ENCODE measurements at regions of chr19 and their contacts with region 1.

Region 1: GRCh38 chr19:55418185-55418584 is 10.6 kb upstream of the UBE2S start:
- DNase-seq: peak; percentile 87
- H3K4me3 ChIP-seq: no peak overlapping the region
- H3K27ac ChIP-seq: no peak overlapping the region
- H3K4me1 ChIP-seq: no peaks in the 10 kb centered on the region
- H3K27me3 ChIP-seq: no peaks in the 10 kb centered on the region
- CTCF ChIP-seq: peak; percentile 85

Region 2: DNA sequence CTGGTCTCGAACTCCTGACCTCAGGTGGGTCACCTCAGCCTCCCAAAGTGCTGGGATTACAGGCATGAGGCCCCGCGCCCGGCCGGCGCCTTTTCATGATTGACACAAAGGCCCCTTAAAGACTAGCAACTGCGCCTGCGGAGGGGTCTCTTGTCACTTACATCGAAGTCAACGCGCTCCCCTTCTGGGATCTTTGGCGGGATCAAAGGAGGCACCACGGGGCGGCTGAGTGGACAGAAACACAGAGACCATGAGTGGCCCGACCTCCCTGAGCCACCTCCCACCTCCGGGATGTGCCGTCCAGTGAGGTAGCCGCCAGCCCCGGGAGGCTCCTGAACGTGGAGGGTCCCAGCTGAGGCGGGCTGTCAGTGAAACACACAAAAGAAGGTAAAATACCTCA is 276.5 kb before region 1 on chr19:
- CTCF ChIA-PET with region 1: interaction called, 7 read pairs
- POLR2A ChIA-PET with region 1: no interaction called
- intact Hi-C with region 1: loop called (anchors 1 kb)
- DNase-seq: no peak
- H3K4me3 ChIP-seq: peak overlapping the region; percentile 10
- H3K27ac ChIP-seq: no peak overlapping the region
- H3K4me1 ChIP-seq: peaks cover 7% of the 10 kb centered on the region
- H3K27me3 ChIP-seq: no peaks in the 10 kb centered on the region
- CTCF ChIP-seq: no peak

Region 3: GRCh38 chr19:55289117-55289796 is 128.9 kb before region 1 on chr19:
- CTCF ChIA-PET with region 1: no interaction called
- POLR2A ChIA-PET with region 1: no interaction called
- intact Hi-C with region 1: loop called (anchors 5 kb)
- DNase-seq: peak; percentile 48
- H3K4me3 ChIP-seq: no peak overlapping the region
- H3K27ac ChIP-seq: no peak overlapping the region
- H3K4me1 ChIP-seq: no peaks in the 10 kb centered on the region
- H3K27me3 ChIP-seq: no peaks in the 10 kb centered on the region
- CTCF ChIP-seq: no peak

Region 4: DNA sequence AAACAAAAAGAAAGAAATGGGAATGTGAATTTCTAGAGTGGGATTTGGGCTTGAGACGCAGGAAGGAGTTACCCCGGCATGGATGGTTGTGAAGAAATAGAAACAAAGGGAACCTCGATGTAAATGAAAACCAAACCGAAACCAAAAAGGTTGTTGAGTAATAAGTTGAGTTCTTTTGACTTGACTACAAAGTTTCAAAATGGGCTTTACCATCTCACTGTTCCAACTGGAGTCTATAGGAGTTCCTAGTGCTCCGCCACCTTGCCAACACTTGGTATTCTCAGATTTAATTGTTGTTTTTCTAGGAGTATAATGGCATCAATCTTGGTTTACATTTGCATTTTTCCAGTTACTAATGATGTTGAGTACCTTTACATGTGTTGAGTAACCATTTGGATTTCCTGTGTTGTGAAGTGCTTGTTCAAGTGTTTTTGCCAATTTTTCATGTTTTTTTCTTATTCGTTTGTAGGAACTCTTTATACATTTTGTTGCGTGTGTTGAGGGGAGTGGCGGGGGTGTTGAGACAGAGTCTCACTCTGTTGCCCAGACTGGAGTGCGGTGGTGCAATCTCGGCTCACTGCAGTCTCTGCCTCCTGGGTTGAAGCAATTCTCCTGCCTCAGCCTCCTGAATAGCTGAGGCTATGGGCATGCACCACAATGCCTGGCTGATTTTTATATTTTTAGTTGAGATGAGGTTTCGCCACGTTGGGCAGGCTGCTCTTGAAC is 19.8 kb before region 1 on chr19:
- CTCF ChIA-PET with region 1: no interaction called
- POLR2A ChIA-PET with region 1: no interaction called
- intact Hi-C with region 1: no loop called
- DNase-seq: no peak
- H3K4me3 ChIP-seq: no peak overlapping the region
- H3K27ac ChIP-seq: no peak overlapping the region
- H3K4me1 ChIP-seq: peaks cover 5% of the 10 kb centered on the region
- H3K27me3 ChIP-seq: no peaks in the 10 kb centered on the region
- CTCF ChIP-seq: no peak